Sigmoid colon (tissue), 7 donors: ENCODE measurements at regions of chr7 and their contacts with region 1.

Region 1: DNA sequence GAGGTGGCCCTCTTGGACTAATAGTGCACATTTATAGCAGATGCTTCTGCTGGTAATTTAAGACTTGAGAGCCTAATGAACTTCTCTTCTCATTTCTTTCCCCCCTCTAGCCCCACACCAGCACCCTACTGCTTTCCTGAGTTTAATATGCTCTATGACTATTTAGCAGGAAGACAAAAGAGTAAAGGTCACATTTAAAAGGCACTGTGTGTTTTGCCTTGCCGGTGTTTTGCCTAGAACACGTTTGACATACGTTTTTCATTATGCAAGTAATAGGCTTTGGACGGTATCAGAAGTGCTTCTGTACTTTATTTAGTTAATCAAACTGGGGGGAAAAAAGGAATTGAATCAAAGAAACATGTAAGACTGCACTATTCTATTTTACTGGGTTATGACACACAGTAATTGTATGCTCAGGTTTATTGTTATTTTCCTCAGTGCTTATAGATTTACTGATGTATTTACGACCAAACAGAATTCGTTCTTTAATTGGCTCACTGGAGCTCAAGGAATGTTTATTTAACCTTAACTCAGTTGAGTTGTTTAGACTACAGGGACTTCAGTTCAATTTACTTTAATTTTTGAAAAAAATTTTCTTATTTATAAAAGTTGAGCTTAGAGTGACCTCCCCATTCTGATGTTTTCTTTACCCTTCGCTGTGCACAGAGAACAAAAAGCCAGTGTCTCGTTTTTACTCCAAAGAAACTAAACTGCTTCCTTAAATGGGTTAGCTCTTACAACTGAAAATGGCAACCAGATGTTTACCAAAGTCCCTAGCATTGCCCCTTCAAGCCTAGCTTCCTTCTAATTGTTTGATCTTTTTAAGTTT is 35.4 kb downstream of the CPED1 start:
- DNase-seq: no peak
- H3K4me3 ChIP-seq: no peak overlapping the region
- H3K27ac ChIP-seq: peak overlapping the region; percentile 62 to 80 (median 76)
- H3K4me1 ChIP-seq: peaks cover 0 to 82% (median 67%) of the 10 kb centered on the region in 4 donors
- H3K27me3 ChIP-seq: no peaks in the 10 kb centered on the region
- CTCF ChIP-seq: no peak
- EP300 ChIP-seq: no peak
- POLR2A ChIP-seq: no peak

Region 2: GRCh38 chr7:120996333-120996987 is 27.4 kb before region 1 on chr7:
- intact Hi-C with region 1: loop called (anchors 2 kb)
- DNase-seq: peak; percentile 93
- H3K4me3 ChIP-seq: no peak overlapping the region
- H3K27ac ChIP-seq: peak overlapping the region in 3 of 4 donors; percentile 86 to 95 (median 89)
- H3K4me1 ChIP-seq: peaks cover 0 to 89% (median 65%) of the 10 kb centered on the region in 4 donors
- H3K27me3 ChIP-seq: no peaks in the 10 kb centered on the region
- CTCF ChIP-seq: no peak
- EP300 ChIP-seq: no peak
- POLR2A ChIP-seq: no peak

Region 3: GRCh38 chr7:121041516-121042148 is 17.7 kb after region 1 on chr7:
- intact Hi-C with region 1: no loop called
- DNase-seq: no peak
- H3K4me3 ChIP-seq: no peak overlapping the region
- H3K27ac ChIP-seq: peak overlapping the region; percentile 29 to 42 (median 37)
- H3K4me1 ChIP-seq: peaks cover 0 to 10% (median 3%) of the 10 kb centered on the region in 4 donors
- H3K27me3 ChIP-seq: no peaks in the 10 kb centered on the region
- CTCF ChIP-seq: no peak
- EP300 ChIP-seq: no peak
- POLR2A ChIP-seq: no peak

Region 4: DNA sequence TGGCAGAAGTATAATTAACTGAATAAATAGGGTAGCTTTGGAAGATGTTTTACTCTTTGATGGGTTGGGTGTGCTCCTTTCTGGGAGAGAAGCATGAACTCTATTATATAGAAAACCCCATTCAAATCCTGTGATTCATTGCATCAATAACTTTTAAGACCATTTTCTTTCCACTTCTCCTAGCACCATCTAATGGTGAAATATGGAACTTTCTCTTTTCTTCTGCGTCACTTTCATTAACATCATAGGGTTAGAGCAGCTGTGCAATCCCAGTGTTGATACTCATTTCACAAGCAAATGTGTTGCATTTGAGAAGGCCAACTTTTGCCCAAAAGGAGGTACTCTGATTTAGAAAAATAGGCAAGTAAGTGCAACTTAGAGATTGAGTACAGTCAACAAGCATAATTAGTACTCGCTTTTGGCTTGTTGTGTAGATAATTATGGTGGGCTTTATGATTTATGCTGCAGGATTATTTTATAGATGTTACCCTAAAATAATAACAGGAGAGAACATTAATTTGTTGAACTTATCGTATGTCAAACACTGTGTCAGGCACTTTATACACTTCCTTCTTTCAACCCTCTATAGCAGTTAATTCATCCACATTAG is 57.5 kb after region 1 on chr7:
- intact Hi-C with region 1: loop called (anchors 5 kb)
- DNase-seq: no peak
- H3K4me3 ChIP-seq: no peak overlapping the region
- H3K27ac ChIP-seq: peak overlapping the region in 3 of 4 donors; percentile 10 to 79 (median 78)
- H3K4me1 ChIP-seq: peaks cover 0 to 48% (median 39%) of the 10 kb centered on the region in 4 donors
- H3K27me3 ChIP-seq: no peaks in the 10 kb centered on the region
- CTCF ChIP-seq: peak; percentile 64 to 77 (median 75)
- EP300 ChIP-seq: no peak
- POLR2A ChIP-seq: no peak